Naive thymus-derived CD4-positive, alpha-beta T cell (primary cell): ENCODE measurements at regions of chr6 and their contacts with region 1.

Region 1: GRCh38 chr6:45922728-45923351 is 92.8 kb downstream of the CLIC5 start:
- DNase-seq: peak in 8 of 9 donors; percentile 13 to 59 (median 36)
- ATAC-seq: peak; percentile 67
- H3K4me3 ChIP-seq: no peak overlapping the region
- H3K4me3 Mint-ChIP-seq: no peak overlapping the region
- H3K27ac ChIP-seq: no peak overlapping the region
- H3K27ac Mint-ChIP-seq: peak overlapping the region in 2 of 9 donors; percentile 28 to 75
- H3K4me1 ChIP-seq: no peaks in the 10 kb centered on the region
- H3K4me1 Mint-ChIP-seq: peaks cover 0 to 42% (median 3%) of the 10 kb centered on the region in 7 donors
- H3K27me3 ChIP-seq: no peaks in the 10 kb centered on the region
- H3K27me3 Mint-ChIP-seq: peaks cover 0 to 11% (median 0%) of the 10 kb centered on the region in 5 donors

Region 2: DNA sequence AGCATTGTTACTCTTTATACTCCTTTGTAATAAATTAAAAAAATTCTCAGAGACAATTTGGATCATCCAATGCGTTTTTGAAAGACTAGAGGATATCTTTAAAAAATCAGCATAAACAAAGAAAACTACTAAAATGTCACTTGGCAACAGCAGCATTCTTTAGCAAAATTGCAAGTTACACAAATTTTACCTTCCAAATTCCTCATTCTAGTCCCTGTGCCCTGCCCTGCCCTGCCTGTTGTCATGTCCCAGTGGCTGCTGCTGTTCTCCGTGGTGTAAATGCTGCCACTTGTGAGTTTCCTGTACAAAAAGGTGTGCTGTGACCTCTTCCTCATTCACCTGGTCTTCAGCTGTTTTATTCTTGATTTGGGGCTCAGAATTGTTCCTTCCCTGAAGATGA is 1452.1 kb before region 1 on chr6:
- CTCF ChIA-PET with region 1: interaction called, 25 read pairs
- POLR2A ChIA-PET with region 1: no interaction called
- intact Hi-C with region 1: loop called (anchors 1 kb)
- DNase-seq: no peak
- ATAC-seq: no peak
- H3K4me3 ChIP-seq: no peak overlapping the region
- H3K4me3 Mint-ChIP-seq: no peak overlapping the region
- H3K27ac ChIP-seq: no peak overlapping the region
- H3K27ac Mint-ChIP-seq: peak overlapping the region in 1 of 9 donors; percentile 49
- H3K4me1 ChIP-seq: peaks cover 0 to 4% of the 10 kb centered on the region in 2 donors
- H3K4me1 Mint-ChIP-seq: peaks cover 0 to 4% (median 0%) of the 10 kb centered on the region in 7 donors
- H3K27me3 ChIP-seq: no peaks in the 10 kb centered on the region
- H3K27me3 Mint-ChIP-seq: peaks cover 0 to 14% (median 5%) of the 10 kb centered on the region in 5 donors

Region 3: GRCh38 chr6:44593539-44593944 is 1329.3 kb before region 1 on chr6:
- CTCF ChIA-PET with region 1: no interaction called
- POLR2A ChIA-PET with region 1: no interaction called
- intact Hi-C with region 1: loop called in 1 of 2 experiments (anchors 1 kb)
- DNase-seq: peak in 8 of 9 donors; percentile 8 to 48 (median 36)
- ATAC-seq: peak; percentile 63
- H3K4me3 ChIP-seq: no peak overlapping the region
- H3K4me3 Mint-ChIP-seq: no peak overlapping the region
- H3K27ac ChIP-seq: no peak overlapping the region
- H3K27ac Mint-ChIP-seq: peak overlapping the region in 1 of 9 donors; percentile 59
- H3K4me1 ChIP-seq: no peaks in the 10 kb centered on the region
- H3K4me1 Mint-ChIP-seq: peaks cover 0 to 9% (median 0%) of the 10 kb centered on the region in 7 donors
- H3K27me3 ChIP-seq: no peaks in the 10 kb centered on the region
- H3K27me3 Mint-ChIP-seq: peaks cover 11 to 20% (median 14%) of the 10 kb centered on the region in 5 donors

Region 4: GRCh38 chr6:45278367-45278766 is 644.5 kb before region 1 on chr6:
- CTCF ChIA-PET with region 1: no interaction called
- POLR2A ChIA-PET with region 1: no interaction called
- intact Hi-C with region 1: no loop called
- DNase-seq: no peak
- ATAC-seq: no peak
- H3K4me3 ChIP-seq: no peak overlapping the region
- H3K4me3 Mint-ChIP-seq: no peak overlapping the region
- H3K27ac ChIP-seq: no peak overlapping the region
- H3K27ac Mint-ChIP-seq: no peak overlapping the region
- H3K4me1 ChIP-seq: no peaks in the 10 kb centered on the region
- H3K4me1 Mint-ChIP-seq: peaks cover 0 to 11% (median 4%) of the 10 kb centered on the region in 7 donors
- H3K27me3 ChIP-seq: no peaks in the 10 kb centered on the region
- H3K27me3 Mint-ChIP-seq: no peaks in the 10 kb centered on the region

Region 5: GRCh38 chr6:45663551-45664221 is 259.2 kb before region 1 on chr6:
- CTCF ChIA-PET with region 1: no interaction called
- POLR2A ChIA-PET with region 1: no interaction called
- intact Hi-C with region 1: loop called in 1 of 2 experiments (anchors 5 kb)
- DNase-seq: peak in 8 of 9 donors; percentile 14 to 55 (median 47)
- ATAC-seq: peak; percentile 72
- H3K4me3 ChIP-seq: peak overlapping the region; percentile 46
- H3K4me3 Mint-ChIP-seq: peak overlapping the region; percentile 34 to 84 (median 71)
- H3K27ac ChIP-seq: no peak overlapping the region
- H3K27ac Mint-ChIP-seq: peak overlapping the region in 1 of 9 donors; percentile 32
- H3K4me1 ChIP-seq: peaks cover 0 to 12% of the 10 kb centered on the region in 2 donors
- H3K4me1 Mint-ChIP-seq: peaks cover 7 to 57% (median 43%) of the 10 kb centered on the region in 7 donors
- H3K27me3 ChIP-seq: no peaks in the 10 kb centered on the region
- H3K27me3 Mint-ChIP-seq: peaks cover 0 to 31% (median 17%) of the 10 kb centered on the region in 5 donors

Region 6: DNA sequence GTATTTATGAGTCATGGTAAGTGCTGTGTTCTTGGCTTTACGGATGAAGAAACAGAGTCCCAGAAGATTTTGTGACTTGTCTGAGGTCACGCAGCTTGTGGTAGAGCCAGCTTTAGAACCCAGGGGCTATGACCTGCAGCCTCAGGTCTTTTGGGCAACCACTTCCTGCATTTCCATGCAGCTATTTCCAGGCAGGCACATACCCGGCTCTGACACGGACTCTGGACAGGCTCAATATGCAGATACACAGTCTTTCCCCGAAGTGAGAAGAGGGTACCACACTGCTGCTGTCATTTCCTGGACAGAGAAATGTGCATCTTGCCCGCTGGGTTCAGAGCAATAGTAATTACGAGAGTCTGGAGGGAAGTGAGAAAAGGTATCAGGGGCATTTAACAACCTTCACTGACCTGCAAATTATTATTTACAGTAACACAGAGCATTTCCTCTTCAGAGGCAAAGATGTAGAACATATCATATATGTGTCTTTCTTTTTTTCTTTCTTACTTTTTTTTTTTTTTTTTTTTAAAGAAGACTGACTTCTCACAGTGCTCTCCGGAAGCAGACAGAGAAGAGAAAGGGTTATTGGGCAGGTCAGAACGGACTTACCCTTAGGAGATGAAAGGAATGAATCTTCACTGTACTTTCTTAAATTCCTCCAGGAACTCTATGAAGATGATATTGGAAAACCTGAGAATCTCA is 92.2 kb before region 1 on chr6:
- CTCF ChIA-PET with region 1: no interaction called
- POLR2A ChIA-PET with region 1: no interaction called
- intact Hi-C with region 1: loop called in 1 of 2 experiments (anchors 5 kb)
- DNase-seq: peak in 1 of 9 donors; percentile 40
- ATAC-seq: peak; percentile 69
- H3K4me3 ChIP-seq: peak overlapping the region; percentile 17
- H3K4me3 Mint-ChIP-seq: peak overlapping the region; percentile 66 to 91 (median 76)
- H3K27ac ChIP-seq: no peak overlapping the region
- H3K27ac Mint-ChIP-seq: peak overlapping the region in 3 of 9 donors; percentile 17 to 84 (median 19)
- H3K4me1 ChIP-seq: peaks cover 0 to 5% of the 10 kb centered on the region in 2 donors
- H3K4me1 Mint-ChIP-seq: peaks cover 10 to 41% (median 17%) of the 10 kb centered on the region in 7 donors
- H3K27me3 ChIP-seq: no peaks in the 10 kb centered on the region
- H3K27me3 Mint-ChIP-seq: peaks cover 0 to 13% (median 5%) of the 10 kb centered on the region in 5 donors